ENCODE measurements at regions of chr19 and their contacts with region 1.

Region 1: DNA sequence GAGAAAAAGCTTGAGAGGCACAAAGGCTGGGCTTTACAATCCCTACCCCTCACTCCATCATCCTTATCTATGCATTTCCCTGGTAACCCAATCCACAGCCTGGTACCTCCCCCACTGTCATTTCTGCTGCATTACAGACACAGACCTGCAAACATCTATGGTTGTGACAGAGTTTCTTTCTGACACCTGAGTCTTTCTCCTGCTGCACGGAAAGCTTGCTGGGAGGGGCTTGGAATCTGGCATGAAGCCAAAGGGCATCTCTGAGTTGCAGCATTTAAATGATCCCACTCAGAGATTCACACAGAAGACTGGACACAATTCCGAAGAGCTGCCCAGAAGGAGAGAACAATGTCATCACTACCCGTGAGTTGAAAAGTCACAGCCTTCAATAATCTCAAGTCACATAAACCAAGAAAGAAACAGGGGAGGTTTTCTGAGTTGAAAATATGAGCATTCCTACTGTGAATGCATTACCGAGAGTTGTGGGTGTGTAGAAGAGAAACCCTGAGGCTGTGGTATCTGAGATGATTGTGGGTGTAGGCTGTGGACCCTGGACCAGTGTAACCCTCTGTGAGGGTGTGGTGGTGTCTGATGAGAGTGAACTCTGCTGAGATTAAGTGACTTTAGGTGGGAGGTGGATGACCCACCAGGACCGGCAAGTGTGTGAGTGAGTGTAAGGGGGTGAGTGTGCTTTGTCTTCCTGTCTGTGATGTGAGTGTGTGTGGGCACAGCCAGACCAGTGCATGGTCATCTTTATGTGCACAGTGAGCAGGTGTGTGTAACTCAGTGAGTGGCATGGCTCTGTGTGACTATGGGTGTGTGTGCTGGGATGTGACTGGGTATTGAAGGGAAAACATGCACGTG is at the start of gene LGALS14:
- DNase-seq: no peak
- H3K4me3 ChIP-seq: no peak within 1 kb of the TSS
- H3K27ac ChIP-seq: no peak within 1 kb of the TSS
- H3K4me1 ChIP-seq: no peaks in the 10 kb centered on the region
- H3K27me3 ChIP-seq: peaks cover 0 to 3% of the 10 kb centered on the region in 2 donors
- CTCF ChIP-seq: no peak
- POLR2A ChIP-seq: no peak
- total RNA-seq, gene LGALS14: not detected

Region 2: GRCh38 chr19:38361633-38362075 is 1342.8 kb before region 1 on chr19:
- intact Hi-C with region 1: loop called (anchors 5 kb)
- DNase-seq: peak; percentile 75 to 83
- H3K4me3 ChIP-seq: peak overlapping the region; percentile 53 to 90 (median 62)
- H3K27ac ChIP-seq: peak overlapping the region; percentile 65 to 76
- H3K4me1 ChIP-seq: no peaks in the 10 kb centered on the region
- H3K27me3 ChIP-seq: peaks cover 0 to 32% of the 10 kb centered on the region in 2 donors
- CTCF ChIP-seq: peak in 1 of 3 donors; percentile 55
- POLR2A ChIP-seq: no peak